ENCODE measurements at regions of chr1 and their contacts with region 1.

Region 1: GRCh38 chr1:110188035-110188618 is 22.0 kb upstream of the KCNC4 start:
- DNase-seq: no peak
- ATAC-seq: no peak
- H3K4me3 Mint-ChIP-seq: no peak overlapping the region
- H3K27ac Mint-ChIP-seq: no peak overlapping the region
- H3K4me1 Mint-ChIP-seq: peaks cover 8% of the 10 kb centered on the region
- H3K27me3 Mint-ChIP-seq: peaks cover 10% of the 10 kb centered on the region

Region 2: DNA sequence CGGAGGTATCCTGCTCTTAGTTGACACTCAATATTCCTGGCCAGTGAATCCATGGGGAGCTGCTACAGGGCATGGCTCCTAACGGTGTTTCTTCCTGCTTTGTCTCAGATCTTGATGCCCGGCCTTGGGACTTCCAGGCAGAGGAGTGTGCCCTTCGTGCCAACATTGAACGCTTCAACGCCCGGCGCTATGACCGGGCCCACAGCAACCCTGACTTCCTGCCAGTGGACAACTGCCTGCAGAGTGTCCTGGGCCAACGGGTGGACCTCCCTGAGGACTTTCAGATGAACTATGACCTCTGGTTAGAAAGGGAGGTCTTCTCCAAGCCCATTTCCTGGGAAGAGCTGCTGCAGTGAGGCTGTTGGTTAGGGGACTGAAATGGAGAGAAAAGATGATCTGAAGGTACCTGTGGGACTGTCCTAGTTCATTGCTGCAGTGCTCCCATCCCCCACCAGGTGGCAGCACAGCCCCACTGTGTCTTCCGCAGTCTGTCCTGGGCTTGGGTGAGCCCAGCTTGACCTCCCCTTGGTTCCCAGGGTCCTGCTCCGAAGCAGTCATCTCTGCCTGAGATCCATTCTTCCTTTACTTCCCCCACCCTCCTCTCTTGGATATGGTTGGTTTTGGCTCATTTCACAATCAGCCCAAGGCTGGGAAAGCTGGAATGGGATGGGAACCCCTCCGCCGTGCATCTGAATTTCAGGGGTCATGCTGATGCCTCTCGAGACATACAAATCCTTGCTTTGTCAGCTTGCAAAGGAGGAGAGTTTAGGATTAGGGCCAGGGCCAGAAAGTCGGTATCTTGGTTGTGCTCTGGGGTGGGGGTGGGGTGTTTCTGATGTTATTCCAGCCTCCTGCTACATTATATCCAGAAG is 134.3 kb before region 1 on chr1:
- CTCF ChIA-PET with region 1: no interaction called
- POLR2A ChIA-PET with region 1: no interaction called
- intact Hi-C with region 1: no loop called
- DNase-seq: peak; percentile 83
- ATAC-seq: peak; percentile 88
- H3K4me3 Mint-ChIP-seq: no peak overlapping the region
- H3K27ac Mint-ChIP-seq: no peak overlapping the region
- H3K4me1 Mint-ChIP-seq: no peaks in the 10 kb centered on the region
- H3K27me3 Mint-ChIP-seq: no peaks in the 10 kb centered on the region

Region 3: DNA sequence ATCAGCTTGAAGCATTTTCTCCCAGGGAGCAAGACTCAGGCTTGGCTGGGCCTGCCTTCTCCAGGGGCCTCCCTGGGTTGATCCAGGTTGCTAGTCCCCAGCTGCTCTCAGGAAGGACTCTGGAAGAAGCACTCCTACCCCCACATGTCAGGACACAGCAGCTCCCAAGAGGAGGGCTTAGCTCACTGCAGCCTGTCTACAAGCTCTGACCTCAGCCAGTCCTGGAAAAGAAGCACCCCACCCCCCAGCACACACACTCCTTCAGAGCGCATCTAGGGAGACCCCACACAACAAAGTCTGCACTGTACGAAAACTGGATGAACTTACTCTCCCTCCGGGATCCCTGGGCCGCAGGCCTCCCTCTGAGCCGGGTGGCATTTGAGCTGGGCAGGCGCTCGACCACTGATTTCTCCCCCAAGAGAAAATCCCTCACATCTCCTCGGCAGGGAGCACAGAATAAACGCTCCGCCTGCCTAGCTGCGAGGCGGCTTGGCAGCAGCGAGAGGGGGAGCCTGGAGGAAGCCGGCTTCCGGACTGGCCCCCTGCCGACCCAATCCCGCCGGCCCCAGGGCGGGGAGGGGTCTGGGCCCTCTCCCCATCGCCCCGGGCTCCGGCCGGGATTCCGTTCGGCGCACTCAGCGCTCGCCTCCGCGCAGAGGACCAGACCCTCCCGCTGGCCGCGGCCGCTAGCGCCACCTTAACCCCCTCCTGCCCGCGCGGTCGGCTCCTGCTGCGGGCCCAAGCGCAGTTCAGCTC is 418.0 kb after region 1 on chr1 and contains the start of gene KCNA2:
- CTCF ChIA-PET with region 1: interaction called, 3 read pairs
- POLR2A ChIA-PET with region 1: no interaction called
- intact Hi-C with region 1: loop called in 1 of 2 experiments (anchors 10 kb)
- DNase-seq: peak; percentile 24
- ATAC-seq: peak; percentile 7
- H3K4me3 Mint-ChIP-seq: peak within 1 kb of the TSS; percentile 68
- H3K27ac Mint-ChIP-seq: no peak within 1 kb of the TSS
- H3K4me1 Mint-ChIP-seq: peaks cover 8% of the 10 kb centered on the region
- H3K27me3 Mint-ChIP-seq: peaks cover 48% of the 10 kb centered on the region
- total RNA-seq, gene KCNA2: 0.25 to 0.37 TPM